Activated T-helper 2 cell treated with anti-CD3 and anti-CD28 coated beads, Interferon-gamma antibody, Interleukin-2, Interleukin-4, amounts not matched to agents 10 μg/mL and 5 μg/mL and 100 μg/mL, durations not matched to agents 14 hours and 24 hours and 36 hours (primary cell): ENCODE measurements at regions of chr2 and their contacts with region 1.

Region 1: DNA sequence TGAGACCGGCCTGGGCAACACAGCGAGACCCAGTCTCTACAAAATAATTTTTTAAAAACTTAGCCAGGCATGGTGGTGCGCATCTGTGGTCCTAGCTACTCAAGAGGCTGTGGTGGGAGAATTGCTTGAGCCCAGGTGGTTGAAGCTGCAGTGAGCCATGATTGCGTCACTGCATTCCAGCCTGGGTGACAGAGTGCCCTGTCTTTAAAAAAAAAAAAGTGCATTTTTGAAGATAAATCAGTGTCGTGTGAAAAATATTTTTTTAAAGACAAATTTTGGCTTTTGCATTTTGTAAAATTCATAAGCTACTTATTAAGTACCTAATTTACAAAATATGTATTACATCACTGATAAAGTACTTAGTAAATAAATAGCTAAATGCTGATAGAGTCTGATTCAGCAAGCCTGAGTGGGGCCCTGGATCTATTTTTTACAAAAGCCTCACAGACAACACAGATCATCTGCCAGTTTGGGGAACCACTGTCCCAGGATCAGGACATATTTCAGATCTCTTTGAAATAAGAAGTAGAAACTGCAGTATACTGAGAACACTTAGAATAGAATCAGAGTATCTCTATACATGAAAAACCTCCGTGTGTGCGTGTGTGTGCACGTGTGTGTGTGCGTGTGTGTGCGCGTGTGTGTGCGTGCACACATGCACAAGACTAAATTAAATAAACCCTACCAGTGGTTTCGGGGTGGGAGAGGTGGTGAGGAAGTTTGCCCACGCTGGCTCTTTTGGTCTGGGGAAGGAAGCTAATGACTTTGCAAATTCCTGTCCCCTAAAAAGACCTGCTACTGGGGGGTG is 61.6 kb downstream of the AAK1 start:
- DNase-seq: no peak
- H3K4me3 Mint-ChIP-seq: no peak overlapping the region
- H3K27ac Mint-ChIP-seq: no peak overlapping the region
- H3K4me1 Mint-ChIP-seq: peaks cover 69% of the 10 kb centered on the region
- H3K27me3 Mint-ChIP-seq: no peaks in the 10 kb centered on the region

Region 2: DNA sequence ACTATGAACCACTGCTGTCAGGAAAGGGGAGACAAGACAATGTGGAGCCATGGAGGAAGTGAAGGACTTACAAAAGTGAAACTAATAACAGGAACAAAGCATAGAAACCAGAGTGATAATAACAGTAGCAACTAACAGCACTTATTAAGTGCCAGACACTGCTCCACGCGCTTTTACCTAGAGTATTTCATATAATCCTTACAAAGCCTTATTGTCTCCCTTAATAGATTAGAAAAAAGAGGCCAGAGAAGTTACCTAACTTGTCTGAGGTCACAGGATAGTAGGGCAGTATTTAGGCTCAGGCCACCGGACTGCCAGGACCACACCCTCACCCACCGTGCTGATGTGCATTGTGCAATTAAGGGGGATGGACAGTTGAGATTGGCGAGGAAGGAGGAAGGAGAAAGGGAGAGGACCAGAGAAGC is 46.1 kb before region 1 on chr2:
- intact Hi-C with region 1: no loop called
- DNase-seq: no peak
- H3K4me3 Mint-ChIP-seq: no peak overlapping the region
- H3K27ac Mint-ChIP-seq: peak overlapping the region; percentile 30
- H3K4me1 Mint-ChIP-seq: peaks cover 26% of the 10 kb centered on the region
- H3K27me3 Mint-ChIP-seq: no peaks in the 10 kb centered on the region

Region 3: GRCh38 chr2:69565431-69565839 is 16.5 kb before region 1 on chr2:
- intact Hi-C with region 1: loop called (anchors 2 kb)
- DNase-seq: peak; percentile 50
- H3K4me3 Mint-ChIP-seq: no peak overlapping the region
- H3K27ac Mint-ChIP-seq: no peak overlapping the region
- H3K4me1 Mint-ChIP-seq: peaks cover 61% of the 10 kb centered on the region
- H3K27me3 Mint-ChIP-seq: no peaks in the 10 kb centered on the region

Region 4: DNA sequence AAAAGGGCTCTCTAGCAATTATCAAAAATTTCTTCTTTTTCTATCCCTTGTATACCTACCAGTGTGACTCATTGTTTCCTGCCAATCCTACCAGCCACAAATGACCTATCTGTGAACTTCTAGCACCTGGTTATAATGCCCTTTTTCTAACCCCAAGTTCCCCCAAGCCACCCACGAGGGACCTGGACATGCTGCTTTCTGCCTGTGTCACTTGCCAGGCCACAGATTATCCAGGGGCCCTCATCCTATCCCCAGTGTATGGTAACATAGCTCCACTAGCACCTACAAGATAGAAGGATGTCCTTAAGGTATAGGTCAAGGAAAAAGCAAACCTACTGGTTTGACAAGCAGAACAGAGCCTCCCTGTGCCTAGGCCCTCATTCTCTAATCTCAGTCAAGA is 34.8 kb after region 1 on chr2:
- intact Hi-C with region 1: loop called (anchors 5 kb)
- DNase-seq: no peak
- H3K4me3 Mint-ChIP-seq: peak overlapping the region; percentile 3
- H3K27ac Mint-ChIP-seq: peak overlapping the region; percentile 31
- H3K4me1 Mint-ChIP-seq: peaks cover 29% of the 10 kb centered on the region
- H3K27me3 Mint-ChIP-seq: no peaks in the 10 kb centered on the region